ENCODE measurements at regions of chr6 and their contacts with region 1.

Region 1: DNA sequence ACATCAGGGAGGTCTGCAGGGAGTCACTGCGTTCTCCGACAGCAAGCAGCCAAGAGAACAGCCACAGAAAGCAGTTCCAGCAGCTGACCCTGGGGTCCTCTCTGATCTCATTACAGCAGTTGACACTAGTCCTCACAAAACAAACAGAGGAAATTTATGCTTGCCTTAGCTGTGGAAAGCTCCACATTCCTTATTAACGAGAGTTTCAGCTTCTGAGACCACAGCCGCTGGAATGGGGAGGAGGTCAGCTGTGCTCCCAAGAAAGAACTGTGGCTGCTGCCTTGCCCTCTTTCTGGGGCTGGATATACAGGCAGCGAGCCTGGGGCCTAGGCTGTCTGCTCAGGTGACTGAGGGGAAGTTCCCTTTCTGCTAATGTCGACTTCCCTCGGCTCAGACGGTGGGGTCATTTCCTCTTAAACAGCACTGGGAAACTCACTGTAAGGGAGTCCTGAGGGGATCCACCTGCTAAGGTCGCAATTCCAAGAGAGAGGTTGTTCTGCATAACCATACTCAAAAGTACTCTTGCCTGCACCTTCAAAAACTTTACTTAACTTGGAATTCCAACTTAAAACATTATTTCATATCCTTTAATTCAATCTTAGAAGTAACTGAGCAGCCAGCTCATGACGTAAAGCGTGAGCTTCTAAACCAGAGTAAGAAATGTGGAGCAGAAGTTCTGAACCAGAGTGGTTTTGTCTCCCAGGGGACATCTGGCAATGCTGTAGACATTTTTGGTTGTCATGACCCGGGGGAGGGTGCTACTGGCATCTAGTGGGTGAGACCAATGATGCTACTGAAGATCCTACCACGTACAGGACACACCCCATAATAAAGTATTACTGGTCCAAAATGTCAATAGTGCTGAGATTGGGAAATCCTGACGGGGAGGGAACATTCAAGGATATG is 80.3 kb downstream of the BACH2 start:
- DNase-seq: peak; percentile 79
- H3K4me3 ChIP-seq: no peak overlapping the region
- H3K27ac ChIP-seq: peak overlapping the region in 1 of 4 donors; percentile 5
- H3K4me1 ChIP-seq: peaks cover 28 to 42% (median 34%) of the 10 kb centered on the region in 4 donors
- H3K27me3 ChIP-seq: no peaks in the 10 kb centered on the region
- CTCF ChIP-seq: no peak
- EP300 ChIP-seq: no peak
- POLR2A ChIP-seq: no peak

Region 2: DNA sequence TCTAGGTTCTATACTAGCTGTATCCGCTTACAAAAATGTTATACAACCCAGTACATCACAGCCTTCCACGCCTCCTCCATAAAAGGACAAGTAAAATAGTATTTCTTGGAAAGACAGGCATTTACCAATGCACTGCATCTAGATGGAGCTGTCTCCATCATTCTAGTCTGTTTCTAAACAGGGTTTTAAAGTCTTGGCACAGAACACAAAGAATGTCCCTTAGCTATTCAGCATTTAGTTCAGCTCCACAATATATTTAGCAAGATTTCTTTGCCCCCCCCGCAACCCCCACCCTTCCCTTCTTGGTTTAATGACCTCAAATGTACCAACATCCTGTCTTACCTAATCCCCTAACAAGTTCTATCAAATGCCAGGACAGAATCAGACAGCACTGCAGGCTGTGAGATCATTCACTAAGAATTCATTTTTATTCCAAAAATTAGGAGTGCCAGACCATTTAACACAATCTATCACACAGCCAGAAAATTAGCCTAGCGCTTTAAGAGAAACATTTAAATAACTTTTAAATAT is 118.3 kb before region 1 on chr6:
- intact Hi-C with region 1: loop called (anchors 5 kb)
- DNase-seq: peak; percentile 97
- H3K4me3 ChIP-seq: no peak overlapping the region
- H3K27ac ChIP-seq: peak overlapping the region; percentile 81 to 85 (median 82)
- H3K4me1 ChIP-seq: peaks cover 22 to 33% (median 32%) of the 10 kb centered on the region in 4 donors
- H3K27me3 ChIP-seq: no peaks in the 10 kb centered on the region
- CTCF ChIP-seq: peak; percentile 33 to 54 (median 44)
- EP300 ChIP-seq: no peak
- POLR2A ChIP-seq: no peak

Region 3: GRCh38 chr6:90285611-90286381 is 69.5 kb after region 1 on chr6:
- intact Hi-C with region 1: loop called (anchors 5 kb)
- DNase-seq: no peak
- H3K4me3 ChIP-seq: peak overlapping the region in 3 of 4 donors; percentile 0 to 31 (median 7)
- H3K27ac ChIP-seq: peak overlapping the region; percentile 40 to 60 (median 55)
- H3K4me1 ChIP-seq: peaks cover 21 to 35% (median 30%) of the 10 kb centered on the region in 4 donors
- H3K27me3 ChIP-seq: no peaks in the 10 kb centered on the region
- CTCF ChIP-seq: no peak
- EP300 ChIP-seq: no peak
- POLR2A ChIP-seq: no peak